ENCODE measurements at regions of chr5 and their contacts with region 1.

Region 1: GRCh38 chr5:16160706-16161105 is 18.9 kb downstream of the MARCHF11 start:
- DNase-seq: peak; percentile 68
- H3K4me3 Mint-ChIP-seq: no peak overlapping the region
- H3K27ac Mint-ChIP-seq: no peak overlapping the region
- H3K4me1 Mint-ChIP-seq: no peaks in the 10 kb centered on the region
- H3K27me3 Mint-ChIP-seq: peaks cover 53% of the 10 kb centered on the region
- CTCF ChIP-seq: peak; percentile 62

Region 2: DNA sequence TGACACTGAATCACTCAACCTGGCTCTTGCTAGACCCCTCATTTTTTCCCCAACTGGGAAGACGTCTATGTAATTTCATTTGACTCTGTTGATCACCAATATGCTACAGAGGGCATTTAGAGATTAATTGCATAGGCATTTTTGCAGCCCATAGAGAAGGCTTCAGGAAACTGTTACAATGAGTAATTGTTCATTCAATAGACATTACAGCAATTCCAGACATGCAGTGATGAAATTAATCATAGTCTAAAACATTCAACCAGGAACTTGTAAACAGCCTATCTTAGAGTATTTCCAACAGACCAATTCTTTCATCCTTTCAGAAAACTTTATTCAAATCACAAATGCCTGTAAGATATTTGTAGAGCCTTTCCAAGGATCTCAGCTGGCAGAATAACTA is 103.4 kb before region 1 on chr5:
- CTCF ChIA-PET with region 1: no interaction called
- POLR2A ChIA-PET with region 1: no interaction called
- intact Hi-C with region 1: no loop called
- DNase-seq: no peak
- H3K4me3 Mint-ChIP-seq: no peak overlapping the region
- H3K27ac Mint-ChIP-seq: no peak overlapping the region
- H3K4me1 Mint-ChIP-seq: peaks cover 6% of the 10 kb centered on the region
- H3K27me3 Mint-ChIP-seq: no peaks in the 10 kb centered on the region
- CTCF ChIP-seq: no peak

Region 3: GRCh38 chr5:16207908-16208307 is 47.2 kb after region 1 on chr5:
- CTCF ChIA-PET with region 1: interaction called, 4 read pairs
- POLR2A ChIA-PET with region 1: no interaction called
- intact Hi-C with region 1: loop called (anchors 5 kb)
- DNase-seq: no peak
- H3K4me3 Mint-ChIP-seq: no peak overlapping the region
- H3K27ac Mint-ChIP-seq: no peak overlapping the region
- H3K4me1 Mint-ChIP-seq: peaks cover 7% of the 10 kb centered on the region
- H3K27me3 Mint-ChIP-seq: peaks cover 24% of the 10 kb centered on the region
- CTCF ChIP-seq: no peak

Region 4: DNA sequence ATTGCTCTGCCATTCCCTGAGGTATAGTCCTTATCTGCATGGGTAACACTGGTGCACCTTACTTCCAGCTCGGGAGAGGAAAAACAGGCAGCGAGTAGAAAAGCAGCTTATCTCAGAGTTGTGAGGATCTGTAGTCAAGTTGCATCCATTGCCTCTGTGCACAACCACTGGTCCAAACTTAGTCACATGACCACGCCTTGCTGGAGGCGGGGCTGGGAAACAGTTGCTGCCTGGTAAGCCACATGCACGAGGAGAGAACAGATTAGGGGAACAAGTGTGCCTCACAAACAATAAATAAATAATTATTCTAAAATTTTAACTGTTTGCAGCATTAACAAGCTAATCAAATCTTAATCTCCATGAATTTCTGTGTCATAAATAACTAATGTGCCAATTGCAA is 286.3 kb after region 1 on chr5:
- CTCF ChIA-PET with region 1: interaction called, 210 read pairs
- POLR2A ChIA-PET with region 1: interaction called, 3 read pairs
- intact Hi-C with region 1: no loop called
- DNase-seq: no peak
- H3K4me3 Mint-ChIP-seq: no peak overlapping the region
- H3K27ac Mint-ChIP-seq: no peak overlapping the region
- H3K4me1 Mint-ChIP-seq: no peaks in the 10 kb centered on the region
- H3K27me3 Mint-ChIP-seq: no peaks in the 10 kb centered on the region
- CTCF ChIP-seq: no peak

Region 5: GRCh38 chr5:16456103-16456832 is 295.6 kb after region 1 on chr5:
- CTCF ChIA-PET with region 1: interaction called, 210 read pairs
- POLR2A ChIA-PET with region 1: interaction called, 9 read pairs
- intact Hi-C with region 1: loop called (anchors 1 kb)
- DNase-seq: peak; percentile 73
- H3K4me3 Mint-ChIP-seq: peak overlapping the region; percentile 13
- H3K27ac Mint-ChIP-seq: peak overlapping the region; percentile 83
- H3K4me1 Mint-ChIP-seq: peaks cover 34% of the 10 kb centered on the region
- H3K27me3 Mint-ChIP-seq: no peaks in the 10 kb centered on the region
- CTCF ChIP-seq: peak; percentile 69

Region 6: GRCh38 chr5:17204133-17204489 is 1043.4 kb after region 1 on chr5:
- CTCF ChIA-PET with region 1: no interaction called
- POLR2A ChIA-PET with region 1: no interaction called
- intact Hi-C with region 1: loop called (anchors 5 kb)
- DNase-seq: no peak
- H3K4me3 Mint-ChIP-seq: no peak overlapping the region
- H3K27ac Mint-ChIP-seq: no peak overlapping the region
- H3K4me1 Mint-ChIP-seq: no peaks in the 10 kb centered on the region
- H3K27me3 Mint-ChIP-seq: peaks cover 12% of the 10 kb centered on the region
- CTCF ChIP-seq: no peak